Prostate gland (tissue), 2 donors: ENCODE measurements at regions of chr20 and their contacts with region 1.

Region 1: GRCh38 chr20:45095753-45096371 is 5.1 kb downstream of the KCNS1 start:
- DNase-seq: peak; percentile 60
- H3K4me3 ChIP-seq: no peak overlapping the region
- H3K27ac ChIP-seq: no peak overlapping the region
- H3K4me1 ChIP-seq: peaks cover 5% of the 10 kb centered on the region
- H3K27me3 ChIP-seq: peaks cover 3% of the 10 kb centered on the region
- CTCF ChIP-seq: peak; percentile 44 to 81 (median 61)
- POLR2A ChIP-seq: no peak

Region 2: DNA sequence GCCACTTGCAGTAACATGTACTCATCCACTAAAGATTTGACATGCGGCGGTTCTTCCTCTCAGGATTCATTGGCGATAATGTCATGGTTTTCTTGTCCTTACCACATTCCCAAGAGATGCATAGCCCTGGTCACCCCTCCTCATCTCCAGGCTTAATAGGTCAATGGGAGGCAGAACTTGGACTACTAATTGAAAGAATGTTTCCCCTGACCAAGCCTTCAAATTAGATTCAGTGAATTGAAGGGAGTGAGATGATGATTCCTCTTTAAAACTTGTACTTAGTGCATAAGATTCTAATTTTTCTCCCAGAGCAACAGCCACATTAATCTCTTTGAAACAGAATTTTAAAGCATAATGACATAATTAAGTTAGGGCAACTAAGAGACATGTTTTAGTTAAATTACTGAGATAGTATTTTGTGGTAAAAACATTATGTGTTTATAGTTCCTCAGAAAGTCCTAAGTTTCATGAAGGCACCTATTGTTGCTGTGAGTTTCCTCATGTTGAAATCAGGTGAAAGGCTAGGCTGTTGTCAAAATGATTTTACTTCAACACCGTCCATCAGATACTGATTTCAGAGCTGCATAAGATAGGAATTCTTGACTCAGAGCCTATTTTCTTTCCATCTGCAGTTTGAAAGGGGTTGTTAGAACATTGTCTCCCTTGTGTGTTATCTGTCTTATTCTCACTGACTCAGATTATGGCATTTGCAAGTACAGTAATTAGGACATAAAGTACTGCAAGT is 81.0 kb before region 1 on chr20:
- intact Hi-C with region 1: loop called (anchors 5 kb)
- DNase-seq: no peak
- H3K4me3 ChIP-seq: no peak overlapping the region
- H3K27ac ChIP-seq: no peak overlapping the region
- H3K4me1 ChIP-seq: no peaks in the 10 kb centered on the region
- H3K27me3 ChIP-seq: no peaks in the 10 kb centered on the region
- CTCF ChIP-seq: no peak
- POLR2A ChIP-seq: no peak

Region 3: GRCh38 chr20:45044084-45044573 is 51.7 kb before region 1 on chr20:
- intact Hi-C with region 1: loop called (anchors 5 kb)
- DNase-seq: peak; percentile 21
- H3K4me3 ChIP-seq: no peak overlapping the region
- H3K27ac ChIP-seq: no peak overlapping the region
- H3K4me1 ChIP-seq: no peaks in the 10 kb centered on the region
- H3K27me3 ChIP-seq: no peaks in the 10 kb centered on the region
- CTCF ChIP-seq: peak; percentile 49 to 74 (median 70)
- POLR2A ChIP-seq: no peak

Region 4: GRCh38 chr20:45293041-45294002 is 197.5 kb after region 1 on chr20:
- intact Hi-C with region 1: loop called (anchors 5 kb)
- DNase-seq: peak; percentile 58
- H3K4me3 ChIP-seq: peak overlapping the region; percentile 32 to 33
- H3K27ac ChIP-seq: peak overlapping the region in 1 of 2 donors; percentile 16
- H3K4me1 ChIP-seq: no peaks in the 10 kb centered on the region
- H3K27me3 ChIP-seq: no peaks in the 10 kb centered on the region
- CTCF ChIP-seq: peak; percentile 59 to 88 (median 76)
- POLR2A ChIP-seq: no peak